CD8-positive, alpha-beta memory T cell (primary cell): ENCODE measurements at regions of chr5 and their contacts with region 1.

Region 1: DNA sequence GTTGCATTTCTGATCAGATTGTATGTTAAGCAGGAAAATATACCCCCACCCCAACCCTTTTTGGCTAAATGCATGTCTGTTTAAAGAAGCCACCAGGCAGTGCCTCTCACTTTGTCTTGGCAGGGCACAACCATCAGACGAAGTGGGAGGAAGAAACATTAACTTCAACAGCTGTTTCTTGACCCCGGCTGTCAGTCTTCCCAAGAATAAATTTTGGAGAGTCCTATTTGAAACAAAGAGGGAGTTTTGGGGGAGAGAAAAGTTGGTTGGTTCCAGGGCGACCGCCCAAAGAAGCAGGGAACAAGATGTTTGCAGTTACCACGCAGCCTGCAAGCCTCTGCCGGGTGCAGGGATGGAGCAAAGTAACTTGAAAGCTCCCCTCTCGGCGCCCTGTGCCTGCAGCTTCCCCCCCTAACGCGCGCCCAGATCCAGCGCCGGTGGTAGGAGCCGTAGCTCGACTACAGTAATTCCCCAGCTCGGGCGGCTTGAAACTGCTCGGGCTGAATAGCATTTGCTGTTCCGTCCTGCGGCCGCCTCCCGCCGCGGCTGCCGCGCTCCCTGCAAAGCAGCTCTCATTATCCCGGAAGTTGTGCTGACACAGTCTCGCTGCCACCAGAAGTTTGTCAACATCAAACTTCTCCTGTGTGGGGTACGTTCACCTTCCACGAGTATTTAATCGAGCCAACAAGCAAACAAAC is 100.7 kb upstream of the SSBP2 start:
- DNase-seq: peak; percentile 78 to 91 (median 86)
- H3K4me3 ChIP-seq: peak overlapping the region; percentile 55
- H3K4me3 Mint-ChIP-seq: peak overlapping the region; percentile 90 to 98 (median 93)
- H3K27ac ChIP-seq: peak overlapping the region; percentile 53
- H3K27ac Mint-ChIP-seq: peak overlapping the region; percentile 86 to 98 (median 96)
- H3K4me1 ChIP-seq: peaks cover 28% of the 10 kb centered on the region
- H3K4me1 Mint-ChIP-seq: peaks cover 32 to 54% (median 40%) of the 10 kb centered on the region in 3 donors
- H3K27me3 ChIP-seq: no peaks in the 10 kb centered on the region
- H3K27me3 Mint-ChIP-seq: no peaks in the 10 kb centered on the region

Region 2: DNA sequence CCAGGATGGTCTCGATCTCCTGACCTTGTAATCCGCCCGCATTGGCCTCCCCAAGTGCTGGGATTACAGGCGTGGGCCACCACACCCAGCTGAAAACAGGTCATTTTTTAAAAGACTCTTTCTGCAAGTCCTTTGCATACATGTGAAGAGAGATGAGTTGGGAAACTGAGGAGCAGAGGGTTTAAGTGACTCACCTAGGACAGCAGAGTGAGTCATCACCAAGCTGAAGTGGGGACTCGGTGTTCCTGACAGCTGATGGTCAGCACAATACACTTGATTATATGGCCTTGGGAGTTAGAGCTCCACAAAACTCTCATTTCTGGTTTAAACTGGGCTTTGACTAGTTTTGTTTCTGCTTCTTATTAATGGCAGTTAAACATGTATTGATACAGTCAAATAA is 62.6 kb before region 1 on chr5:
- CTCF ChIA-PET with region 1: no interaction called
- POLR2A ChIA-PET with region 1: no interaction called
- DNase-seq: no peak
- H3K4me3 ChIP-seq: no peak overlapping the region
- H3K4me3 Mint-ChIP-seq: no peak overlapping the region
- H3K27ac ChIP-seq: no peak overlapping the region
- H3K27ac Mint-ChIP-seq: no peak overlapping the region
- H3K4me1 ChIP-seq: peaks cover 5% of the 10 kb centered on the region
- H3K4me1 Mint-ChIP-seq: peaks cover 7 to 12% (median 11%) of the 10 kb centered on the region in 3 donors
- H3K27me3 ChIP-seq: no peaks in the 10 kb centered on the region
- H3K27me3 Mint-ChIP-seq: peaks cover 0 to 6% of the 10 kb centered on the region in 2 donors

Region 3: DNA sequence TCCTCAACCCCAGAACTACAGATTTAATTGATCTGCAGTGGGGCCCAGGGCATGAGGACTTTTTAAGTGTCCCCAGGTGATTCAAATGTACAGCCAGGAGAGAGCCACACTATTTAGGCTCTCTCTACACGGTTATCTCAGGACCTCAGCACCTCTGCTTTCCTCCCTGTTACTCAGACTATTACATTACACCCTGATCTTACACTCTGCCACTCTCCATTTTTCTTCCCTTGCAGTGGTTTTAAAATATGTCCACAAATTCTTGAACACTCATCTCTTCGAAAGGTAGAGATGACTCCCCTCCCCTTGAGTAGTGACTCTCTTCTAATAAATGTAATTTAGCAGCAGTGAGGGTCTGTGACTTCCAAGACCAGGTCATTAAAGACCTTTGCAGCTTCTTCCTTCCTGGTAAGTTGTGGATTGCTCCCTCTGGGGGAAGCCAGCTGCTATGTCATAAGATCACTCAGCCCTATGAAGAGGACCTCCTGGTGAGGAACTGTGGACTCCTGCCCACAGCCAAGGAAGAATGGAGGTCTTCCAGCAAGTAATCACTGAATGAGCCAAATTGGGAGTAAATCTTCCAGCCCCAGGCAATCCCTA is 13.2 kb before region 1 on chr5:
- CTCF ChIA-PET with region 1: interaction called, 14 read pairs
- POLR2A ChIA-PET with region 1: interaction called, 6 read pairs
- DNase-seq: peak in 2 of 5 donors; percentile 11 to 37
- H3K4me3 ChIP-seq: no peak overlapping the region
- H3K4me3 Mint-ChIP-seq: no peak overlapping the region
- H3K27ac ChIP-seq: no peak overlapping the region
- H3K27ac Mint-ChIP-seq: no peak overlapping the region
- H3K4me1 ChIP-seq: no peaks in the 10 kb centered on the region
- H3K4me1 Mint-ChIP-seq: peaks cover 2 to 9% (median 3%) of the 10 kb centered on the region in 3 donors
- H3K27me3 ChIP-seq: no peaks in the 10 kb centered on the region
- H3K27me3 Mint-ChIP-seq: no peaks in the 10 kb centered on the region

Region 4: GRCh38 chr5:81948349-81948748 is 96.7 kb after region 1 on chr5:
- CTCF ChIA-PET with region 1: no interaction called
- POLR2A ChIA-PET with region 1: no interaction called
- DNase-seq: no peak
- H3K4me3 ChIP-seq: no peak overlapping the region
- H3K4me3 Mint-ChIP-seq: no peak overlapping the region
- H3K27ac ChIP-seq: no peak overlapping the region
- H3K27ac Mint-ChIP-seq: no peak overlapping the region
- H3K4me1 ChIP-seq: no peaks in the 10 kb centered on the region
- H3K4me1 Mint-ChIP-seq: no peaks in the 10 kb centered on the region
- H3K27me3 ChIP-seq: no peaks in the 10 kb centered on the region
- H3K27me3 Mint-ChIP-seq: no peaks in the 10 kb centered on the region

Region 5: GRCh38 chr5:81971712-81972495 is 120.3 kb after region 1 on chr5 and contains the start of gene ATG10:
- CTCF ChIA-PET with region 1: no interaction called
- POLR2A ChIA-PET with region 1: interaction called, 14 read pairs
- DNase-seq: peak; percentile 83 to 91 (median 87)
- H3K4me3 ChIP-seq: peak within 1 kb of the TSS; percentile 79
- H3K4me3 Mint-ChIP-seq: peak within 1 kb of the TSS; percentile 94 to 99 (median 97)
- H3K27ac ChIP-seq: peak within 1 kb of the TSS; percentile 93
- H3K27ac Mint-ChIP-seq: peak within 1 kb of the TSS; percentile 95 to 100 (median 100)
- H3K4me1 ChIP-seq: peaks cover 23% of the 10 kb centered on the region
- H3K4me1 Mint-ChIP-seq: peaks cover 19 to 26% (median 20%) of the 10 kb centered on the region in 3 donors
- H3K27me3 ChIP-seq: no peaks in the 10 kb centered on the region
- H3K27me3 Mint-ChIP-seq: no peaks in the 10 kb centered on the region
- total RNA-seq, gene ATG10: 8.3 to 8.8 TPM